CD8-positive, alpha-beta T cell (primary cell): ENCODE measurements at regions of chr3 and their contacts with region 1.

Region 1: GRCh38 chr3:107574650-107575049 is 51.9 kb downstream of the BBX start:
- DNase-seq: peak in 2 of 9 experiments; percentile 30 to 42
- ATAC-seq: no peak
- H3K4me3 ChIP-seq: no peak overlapping the region
- H3K4me3 Mint-ChIP-seq: no peak overlapping the region
- H3K27ac ChIP-seq: no peak overlapping the region
- H3K27ac Mint-ChIP-seq: no peak overlapping the region
- H3K4me1 ChIP-seq: peaks cover 6% of the 10 kb centered on the region
- H3K4me1 Mint-ChIP-seq: peaks cover 46% of the 10 kb centered on the region
- H3K27me3 ChIP-seq: no peaks in the 10 kb centered on the region
- H3K27me3 Mint-ChIP-seq: no peaks in the 10 kb centered on the region
- CTCF ChIP-seq: peak; percentile 29

Region 2: DNA sequence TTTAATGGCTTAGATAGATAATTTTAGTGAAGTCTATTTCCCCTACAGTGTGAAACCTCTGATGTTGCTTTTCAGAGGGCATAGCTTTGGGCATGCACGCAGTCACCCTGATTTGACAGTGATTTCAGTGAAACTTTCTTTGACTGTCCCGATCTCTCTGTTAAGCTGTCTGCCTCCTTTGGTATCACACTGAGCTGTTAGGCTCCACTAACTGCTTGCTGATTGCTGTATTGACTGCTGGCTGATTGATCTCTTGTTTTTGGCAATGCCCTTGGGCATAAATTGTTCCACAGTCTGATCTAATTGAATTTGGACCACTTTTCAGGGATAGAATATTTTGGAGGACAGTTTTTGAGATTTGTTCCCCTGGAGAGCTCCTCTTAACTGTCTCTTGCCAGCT is 265.9 kb before region 1 on chr3:
- CTCF ChIA-PET with region 1: no interaction called
- POLR2A ChIA-PET with region 1: no interaction called
- intact Hi-C with region 1: no loop called
- DNase-seq: no peak
- ATAC-seq: no peak
- H3K4me3 ChIP-seq: no peak overlapping the region
- H3K4me3 Mint-ChIP-seq: no peak overlapping the region
- H3K27ac ChIP-seq: no peak overlapping the region
- H3K27ac Mint-ChIP-seq: no peak overlapping the region
- H3K4me1 ChIP-seq: no peaks in the 10 kb centered on the region
- H3K4me1 Mint-ChIP-seq: no peaks in the 10 kb centered on the region
- H3K27me3 ChIP-seq: no peaks in the 10 kb centered on the region
- H3K27me3 Mint-ChIP-seq: no peaks in the 10 kb centered on the region
- CTCF ChIP-seq: no peak

Region 3: DNA sequence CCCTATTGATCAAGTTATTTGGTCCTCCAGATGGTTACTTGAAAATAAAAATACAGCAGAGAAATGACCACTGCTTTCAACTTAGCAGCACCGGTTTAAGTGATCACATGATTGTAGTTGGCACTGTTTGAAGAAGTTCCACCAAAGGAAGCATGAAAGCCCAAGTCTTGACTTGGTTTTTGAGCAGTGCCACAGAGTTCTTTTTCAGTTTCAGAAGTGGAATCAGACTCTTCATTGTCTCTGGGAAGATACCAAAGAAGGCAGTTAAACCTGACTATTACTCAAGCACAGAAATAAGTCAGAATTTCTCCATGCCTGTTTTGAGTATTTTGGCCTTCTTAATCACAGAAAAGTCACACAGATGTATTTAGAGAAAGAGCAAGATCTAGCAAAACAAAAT is 14.8 kb after region 1 on chr3:
- CTCF ChIA-PET with region 1: interaction called, 11 read pairs
- POLR2A ChIA-PET with region 1: interaction called, 13 read pairs
- intact Hi-C with region 1: no loop called
- DNase-seq: no peak
- ATAC-seq: no peak
- H3K4me3 ChIP-seq: no peak overlapping the region
- H3K4me3 Mint-ChIP-seq: no peak overlapping the region
- H3K27ac ChIP-seq: no peak overlapping the region
- H3K27ac Mint-ChIP-seq: no peak overlapping the region
- H3K4me1 ChIP-seq: no peaks in the 10 kb centered on the region
- H3K4me1 Mint-ChIP-seq: peaks cover 32% of the 10 kb centered on the region
- H3K27me3 ChIP-seq: no peaks in the 10 kb centered on the region
- H3K27me3 Mint-ChIP-seq: no peaks in the 10 kb centered on the region
- CTCF ChIP-seq: no peak

Region 4: GRCh38 chr3:107846279-107846852 is 271.7 kb after region 1 on chr3:
- CTCF ChIA-PET with region 1: no interaction called
- POLR2A ChIA-PET with region 1: no interaction called
- intact Hi-C with region 1: loop called in 1 of 2 experiments (anchors 5 kb)
- DNase-seq: peak in 4 of 9 experiments; percentile 18 to 48 (median 38)
- ATAC-seq: no peak
- H3K4me3 ChIP-seq: no peak overlapping the region
- H3K4me3 Mint-ChIP-seq: no peak overlapping the region
- H3K27ac ChIP-seq: no peak overlapping the region
- H3K27ac Mint-ChIP-seq: no peak overlapping the region
- H3K4me1 ChIP-seq: no peaks in the 10 kb centered on the region
- H3K4me1 Mint-ChIP-seq: no peaks in the 10 kb centered on the region
- H3K27me3 ChIP-seq: no peaks in the 10 kb centered on the region
- H3K27me3 Mint-ChIP-seq: peaks cover 6% of the 10 kb centered on the region
- CTCF ChIP-seq: no peak